Activated CD4-positive, alpha-beta memory T cell treated with anti-CD3 and anti-CD28 coated beads for 36 hours (primary cell): ENCODE measurements at regions of chr7 and their contacts with region 1.

Region 1: GRCh38 chr7:23105644-23106056 is at the start of gene KLHL7:
- DNase-seq: peak; percentile 97
- H3K4me3 Mint-ChIP-seq: peak within 1 kb of the TSS; percentile 98
- H3K27ac Mint-ChIP-seq: peak within 1 kb of the TSS; percentile 88
- H3K4me1 Mint-ChIP-seq: peaks cover 41% of the 10 kb centered on the region
- H3K27me3 Mint-ChIP-seq: no peaks in the 10 kb centered on the region
- total RNA-seq, gene KLHL7: 24.3 to 24.8 TPM

Region 2: GRCh38 chr7:22822486-22823141 is 283.0 kb before region 1 on chr7 and contains the start of gene TOMM7:
- CTCF ChIA-PET with region 1: no interaction called
- POLR2A ChIA-PET with region 1: no interaction called
- intact Hi-C with region 1: loop called (anchors 5 kb)
- DNase-seq: peak; percentile 92
- H3K4me3 Mint-ChIP-seq: peak within 1 kb of the TSS; percentile 96
- H3K27ac Mint-ChIP-seq: peak within 1 kb of the TSS; percentile 90
- H3K4me1 Mint-ChIP-seq: peaks cover 34% of the 10 kb centered on the region
- H3K27me3 Mint-ChIP-seq: peaks cover 11% of the 10 kb centered on the region
- total RNA-seq, gene TOMM7: 277 to 279 TPM

Region 3: GRCh38 chr7:22854158-22855048 is 251.2 kb before region 1 on chr7:
- CTCF ChIA-PET with region 1: no interaction called
- POLR2A ChIA-PET with region 1: no interaction called
- intact Hi-C with region 1: loop called (anchors 5 kb)
- DNase-seq: no peak
- H3K4me3 Mint-ChIP-seq: peak overlapping the region; percentile 93
- H3K27ac Mint-ChIP-seq: peak overlapping the region; percentile 93
- H3K4me1 Mint-ChIP-seq: peaks cover 34% of the 10 kb centered on the region
- H3K27me3 Mint-ChIP-seq: peaks cover 2% of the 10 kb centered on the region

Region 4: GRCh38 chr7:23261843-23262452 is 156.3 kb after region 1 on chr7:
- CTCF ChIA-PET with region 1: no interaction called
- POLR2A ChIA-PET with region 1: no interaction called
- intact Hi-C with region 1: no loop called
- DNase-seq: peak; percentile 73
- H3K4me3 Mint-ChIP-seq: no peak overlapping the region
- H3K27ac Mint-ChIP-seq: no peak overlapping the region
- H3K4me1 Mint-ChIP-seq: peaks cover 10% of the 10 kb centered on the region
- H3K27me3 Mint-ChIP-seq: peaks cover 7% of the 10 kb centered on the region

Region 5: GRCh38 chr7:23298885-23299769 is 193.5 kb after region 1 on chr7 and contains the start of gene MALSU1:
- CTCF ChIA-PET with region 1: no interaction called
- POLR2A ChIA-PET with region 1: no interaction called
- intact Hi-C with region 1: loop called (anchors 1 kb)
- DNase-seq: peak; percentile 98
- H3K4me3 Mint-ChIP-seq: peak within 1 kb of the TSS; percentile 96
- H3K27ac Mint-ChIP-seq: peak within 1 kb of the TSS; percentile 97
- H3K4me1 Mint-ChIP-seq: peaks cover 36% of the 10 kb centered on the region
- H3K27me3 Mint-ChIP-seq: peaks cover 3% of the 10 kb centered on the region
- total RNA-seq, gene MALSU1: 100 to 101 TPM